H1 (cell line): ENCODE measurements at regions of chr14 and their contacts with region 1.

Region 1: DNA sequence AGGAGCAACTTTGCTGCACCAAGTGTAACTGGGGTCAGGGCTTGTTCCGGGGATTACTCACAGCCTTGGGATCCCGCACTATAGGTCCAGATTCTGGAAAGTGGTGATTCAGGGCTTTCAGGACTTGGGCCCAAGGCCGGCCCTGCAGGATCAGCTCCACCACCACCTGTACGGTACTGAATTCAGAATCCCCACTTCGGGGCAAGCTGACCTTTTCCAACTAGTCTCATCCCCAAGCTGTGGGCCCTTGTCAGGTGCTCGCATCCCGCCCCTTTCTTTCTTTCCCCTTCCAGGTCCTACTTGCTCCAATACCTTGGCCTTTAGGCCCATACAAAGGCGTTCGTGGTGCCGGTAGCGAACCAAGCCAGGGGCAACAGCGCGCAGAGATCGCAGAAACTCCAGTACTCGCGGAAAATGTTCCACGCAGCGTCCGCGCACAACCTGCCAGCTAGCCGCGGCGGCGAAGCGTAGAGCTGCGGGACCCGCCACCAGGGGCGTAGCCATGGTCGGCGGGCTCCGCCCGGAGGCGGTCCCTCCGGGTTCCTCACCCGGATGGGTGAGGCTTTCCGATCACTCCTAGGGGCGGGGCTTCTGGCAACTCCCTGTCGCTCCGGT is 487 bp downstream of the TINF2 start:
- DNase-seq: peak; percentile 59 to 94
- H3K4me3 ChIP-seq: peak overlapping the region; percentile 80 to 97 (median 92)
- H3K27ac ChIP-seq: peak overlapping the region; percentile 84
- H3K4me1 ChIP-seq: peaks cover 0 to 5% (median 2%) of the 10 kb centered on the region in 4 experiments; a peak in 4 of 7 replicates
- H3K27me3 ChIP-seq: no peaks in the 10 kb centered on the region
- CTCF ChIP-seq: peak; percentile 34 to 54 (median 35); a peak in 3 of 4 replicates
- EP300 ChIP-seq: no peak
- POLR2A ChIP-seq: no peak
- RAD21 ChIP-seq: no peak

Region 2: DNA sequence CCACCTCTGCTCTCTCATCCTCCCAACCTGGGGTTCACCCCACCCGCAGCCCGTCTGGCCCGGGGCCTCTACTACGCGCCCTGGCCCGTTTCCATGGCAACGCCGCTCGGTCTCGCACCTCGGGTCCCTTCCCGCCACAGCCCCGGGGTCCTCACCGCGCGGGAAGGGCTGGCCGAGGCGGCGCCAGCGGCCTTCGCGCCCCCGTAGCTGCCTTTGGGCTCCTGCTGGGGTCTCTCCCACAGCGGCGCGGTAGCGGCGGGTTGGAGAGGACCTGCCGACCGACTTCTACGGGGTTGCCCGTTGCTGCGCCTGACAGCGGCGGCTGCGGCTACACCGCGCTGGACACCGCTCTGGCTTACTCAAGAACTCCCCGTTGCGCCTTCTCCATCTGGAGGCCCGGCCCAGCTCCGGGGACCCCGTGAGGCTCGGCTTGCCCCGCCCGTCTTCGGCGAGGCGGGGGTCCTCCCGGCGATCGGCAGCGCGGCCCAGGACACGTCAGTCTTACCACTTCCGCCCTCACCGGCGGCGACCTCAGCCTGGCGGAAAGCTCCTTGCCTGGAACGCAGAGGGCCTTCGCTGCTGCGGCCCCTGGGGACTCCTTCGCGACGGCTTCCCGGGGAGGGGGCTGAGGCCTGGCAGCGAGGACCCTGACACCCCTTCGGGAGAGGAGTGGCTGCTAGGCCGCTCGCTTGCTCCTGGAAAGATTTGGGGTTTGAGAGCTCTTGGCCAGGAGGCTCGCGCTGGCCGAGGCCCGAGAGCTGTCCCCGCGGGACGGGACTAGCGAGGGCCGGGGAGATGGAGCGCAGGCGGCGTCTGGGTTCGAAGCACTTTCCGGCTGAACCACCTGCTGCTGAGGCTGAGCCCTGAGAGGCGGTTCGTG is 46.5 kb before region 1 on chr14 and contains the start of gene TM9SF1:
- CTCF ChIA-PET with region 1: interaction called, 7 read pairs
- POLR2A ChIA-PET with region 1: interaction called, 18 read pairs
- DNase-seq: peak; percentile 83 to 93
- H3K4me3 ChIP-seq: peak within 1 kb of the TSS; percentile 65 to 88 (median 84)
- H3K27ac ChIP-seq: peak within 1 kb of the TSS; percentile 95
- H3K4me1 ChIP-seq: peaks cover 0 to 9% (median 3%) of the 10 kb centered on the region in 4 experiments; a peak in 3 of 7 replicates
- H3K27me3 ChIP-seq: no peaks in the 10 kb centered on the region
- CTCF ChIP-seq: peak in 1 of 3 experiments; percentile 8; a peak in 1 of 4 replicates
- EP300 ChIP-seq: no peak
- POLR2A ChIP-seq: peak; percentile 7 to 61; a peak in 2 of 3 replicates
- RAD21 ChIP-seq: no peak
- total RNA-seq, gene TM9SF1: 22.2 and 25.3 TPM in 2 replicates

Region 3: DNA sequence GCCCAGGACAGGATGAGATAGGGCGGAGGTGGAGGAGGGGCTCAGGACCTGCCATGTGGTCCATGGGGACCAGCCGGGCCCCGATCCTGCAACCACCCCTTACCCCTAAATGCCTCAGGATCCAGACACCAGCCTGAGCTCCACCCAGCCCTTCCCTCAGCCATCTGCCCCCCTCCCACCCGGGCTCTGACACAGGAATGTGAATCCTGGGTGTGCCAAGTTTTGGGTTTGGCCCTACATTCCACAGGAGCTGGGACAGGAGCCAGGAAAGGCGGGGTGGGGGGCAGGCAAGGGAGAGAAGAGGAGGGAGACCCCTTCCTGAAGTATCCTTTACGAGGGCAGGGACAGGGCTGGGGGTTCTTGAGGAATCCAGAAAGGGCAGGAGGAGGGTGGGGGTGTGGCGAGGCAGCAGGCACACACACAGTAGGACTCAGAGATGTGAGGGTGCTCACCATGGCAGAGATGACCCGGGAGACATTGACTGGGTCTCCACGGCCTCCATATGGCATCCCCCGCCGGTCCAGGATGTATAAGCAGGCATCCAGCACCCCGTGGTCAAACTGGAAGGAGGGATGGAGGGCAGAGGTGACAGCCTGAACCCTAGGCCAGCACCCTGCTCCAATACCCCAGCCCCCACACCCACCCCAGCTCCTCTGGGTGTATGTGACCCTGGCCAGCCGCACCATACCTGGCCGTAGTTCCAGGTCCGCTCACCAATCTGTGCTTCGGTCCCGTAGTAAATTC is 17.5 kb after region 1 on chr14:
- CTCF ChIA-PET with region 1: interaction called, 31 read pairs
- POLR2A ChIA-PET with region 1: interaction called, 12 read pairs
- DNase-seq: no peak
- H3K4me3 ChIP-seq: no peak overlapping the region
- H3K27ac ChIP-seq: no peak overlapping the region
- H3K4me1 ChIP-seq: peaks cover 0 to 2% (median 0%) of the 10 kb centered on the region in 4 experiments; a peak in 1 of 7 replicates
- H3K27me3 ChIP-seq: no peaks in the 10 kb centered on the region; a peak in 1 of 7 replicates
- CTCF ChIP-seq: no peak
- EP300 ChIP-seq: no peak
- POLR2A ChIP-seq: no peak
- RAD21 ChIP-seq: no peak

Region 4: GRCh38 chr14:24271134-24271833 is 29.3 kb after region 1 on chr14 and contains the start of gene RABGGTA:
- CTCF ChIA-PET with region 1: interaction called, 33 read pairs
- POLR2A ChIA-PET with region 1: interaction called, 26 read pairs
- DNase-seq: peak; percentile 82 to 98
- H3K4me3 ChIP-seq: peak within 1 kb of the TSS; percentile 61 to 89 (median 82)
- H3K27ac ChIP-seq: peak within 1 kb of the TSS; percentile 96
- H3K4me1 ChIP-seq: peaks cover 0 to 4% (median 2%) of the 10 kb centered on the region in 4 experiments; a peak in 4 of 7 replicates
- H3K27me3 ChIP-seq: no peaks in the 10 kb centered on the region; a peak in 1 of 7 replicates
- CTCF ChIP-seq: peak; percentile 87 to 90 (median 90)
- EP300 ChIP-seq: peak; percentile 14 to 76; a peak in 2 of 3 replicates
- POLR2A ChIP-seq: peak in 1 of 2 experiments; percentile 96; a peak in 2 of 3 replicates
- RAD21 ChIP-seq: peak in 1 of 2 experiments; percentile 25; a peak in 2 of 4 replicates
- total RNA-seq, gene RABGGTA: 16.0 and 16.9 TPM in 2 replicates

Region 5: DNA sequence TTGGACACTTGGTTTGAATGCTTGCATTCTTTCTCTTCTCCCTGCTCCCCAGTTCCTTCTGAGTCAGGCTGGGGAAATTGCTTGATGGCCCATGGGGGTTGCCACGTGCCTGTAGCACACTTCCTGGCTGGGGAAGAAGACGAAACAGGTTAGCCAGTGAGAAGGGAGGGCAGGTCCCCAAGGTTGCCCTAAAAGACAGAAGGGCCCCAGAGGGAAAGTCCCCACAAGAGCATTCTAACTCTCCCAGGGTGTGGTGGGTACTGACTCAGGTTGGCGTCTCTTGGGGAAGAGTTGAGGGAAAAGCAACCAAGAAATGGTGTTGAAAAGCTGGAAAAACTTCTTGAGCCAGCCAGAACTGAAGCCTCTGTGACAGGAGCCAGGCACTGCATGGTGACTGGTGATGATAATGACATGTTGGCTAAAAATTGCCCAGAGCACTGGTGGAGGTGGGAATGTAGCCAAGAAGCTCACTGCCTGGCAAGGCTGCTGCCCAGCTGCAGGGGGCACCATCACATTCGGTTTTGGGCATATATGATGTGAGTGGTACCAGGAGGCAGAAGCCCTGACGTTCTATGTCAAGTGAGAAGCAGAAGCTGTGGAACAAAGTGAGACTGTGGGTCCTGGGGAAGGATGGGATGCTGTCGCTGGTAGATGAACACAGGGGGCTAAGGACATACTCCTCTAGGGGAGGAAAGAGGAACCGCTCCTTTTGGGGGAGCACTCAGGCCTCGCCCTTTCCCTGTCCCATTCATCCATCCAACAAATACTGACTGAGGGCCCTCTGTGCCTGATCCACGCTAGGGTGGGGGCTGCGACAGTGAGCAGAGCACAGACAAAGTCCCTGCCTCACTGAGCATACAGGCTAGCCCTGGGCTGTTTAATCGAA is 37.6 kb after region 1 on chr14:
- CTCF ChIA-PET with region 1: interaction called, 30 read pairs
- POLR2A ChIA-PET with region 1: interaction called, 8 read pairs
- DNase-seq: no peak
- H3K4me3 ChIP-seq: no peak overlapping the region
- H3K27ac ChIP-seq: no peak overlapping the region
- H3K4me1 ChIP-seq: no peaks in the 10 kb centered on the region
- H3K27me3 ChIP-seq: no peaks in the 10 kb centered on the region
- CTCF ChIP-seq: peak; percentile 27 to 52 (median 51); a peak in 2 of 4 replicates
- EP300 ChIP-seq: no peak
- POLR2A ChIP-seq: no peak
- RAD21 ChIP-seq: peak; percentile 10 to 28; a peak in 2 of 4 replicates

Region 6: GRCh38 chr14:24289649-24290249 is 47.8 kb after region 1 on chr14:
- CTCF ChIA-PET with region 1: interaction called, 163 read pairs
- POLR2A ChIA-PET with region 1: interaction called, 4 read pairs
- DNase-seq: no peak
- H3K4me3 ChIP-seq: no peak overlapping the region
- H3K27ac ChIP-seq: no peak overlapping the region
- H3K4me1 ChIP-seq: no peaks in the 10 kb centered on the region
- H3K27me3 ChIP-seq: no peaks in the 10 kb centered on the region
- CTCF ChIP-seq: no peak
- EP300 ChIP-seq: no peak
- POLR2A ChIP-seq: no peak
- RAD21 ChIP-seq: no peak

Region 7: GRCh38 chr14:24299255-24300195 is 57.6 kb after region 1 on chr14 and contains the starts of genes DHRS1 and NOP9:
- CTCF ChIA-PET with region 1: interaction called, 163 read pairs
- POLR2A ChIA-PET with region 1: interaction called, 50 read pairs
- DNase-seq: peak; percentile 61 to 99
- H3K4me3 ChIP-seq: peak within 1 kb of the TSS; percentile 76 to 91 (median 88)
- H3K27ac ChIP-seq: no peak within 1 kb of the TSS
- H3K4me1 ChIP-seq: peaks cover 0 to 7% (median 4%) of the 10 kb centered on the region in 4 experiments; a peak in 5 of 7 replicates
- H3K27me3 ChIP-seq: no peaks in the 10 kb centered on the region
- CTCF ChIP-seq: no peak
- EP300 ChIP-seq: peak in 1 of 2 experiments; percentile 10; a peak in 1 of 3 replicates
- POLR2A ChIP-seq: peak; percentile 81 to 88
- RAD21 ChIP-seq: no peak
- total RNA-seq, gene DHRS1: 8.8 and 13.4 TPM in 2 replicates
- total RNA-seq, gene NOP9: 34.8 and 39.3 TPM in 2 replicates